Endothelial cell of umbilical vein (primary cell): ENCODE measurements at regions of chr5 and their contacts with region 1.

Region 1: GRCh38 chr5:142426129-142427014 is 101.6 kb upstream of the SPRY4 start:
- DNase-seq: peak; percentile 85
- H3K4me3 ChIP-seq: peak overlapping the region in 1 of 3 experiments; percentile 38
- H3K27ac ChIP-seq: peak overlapping the region; percentile 70
- H3K4me1 ChIP-seq: peaks cover 44% of the 10 kb centered on the region
- H3K27me3 ChIP-seq: no peaks in the 10 kb centered on the region
- CTCF ChIP-seq: no peak
- POLR2A ChIP-seq: peak; percentile 64

Region 2: GRCh38 chr5:142316051-142316450 is 110.3 kb before region 1 on chr5:
- CTCF ChIA-PET with region 1: no interaction called
- POLR2A ChIA-PET with region 1: no interaction called
- dilution Hi-C with region 1: no loop called
- intact Hi-C with region 1: loop called (anchors 2 kb)
- DNase-seq: peak; percentile 82
- H3K4me3 ChIP-seq: no peak overlapping the region
- H3K27ac ChIP-seq: peak overlapping the region; percentile 57
- H3K4me1 ChIP-seq: peaks cover 68% of the 10 kb centered on the region
- H3K27me3 ChIP-seq: no peaks in the 10 kb centered on the region
- CTCF ChIP-seq: no peak
- POLR2A ChIP-seq: no peak

Region 3: DNA sequence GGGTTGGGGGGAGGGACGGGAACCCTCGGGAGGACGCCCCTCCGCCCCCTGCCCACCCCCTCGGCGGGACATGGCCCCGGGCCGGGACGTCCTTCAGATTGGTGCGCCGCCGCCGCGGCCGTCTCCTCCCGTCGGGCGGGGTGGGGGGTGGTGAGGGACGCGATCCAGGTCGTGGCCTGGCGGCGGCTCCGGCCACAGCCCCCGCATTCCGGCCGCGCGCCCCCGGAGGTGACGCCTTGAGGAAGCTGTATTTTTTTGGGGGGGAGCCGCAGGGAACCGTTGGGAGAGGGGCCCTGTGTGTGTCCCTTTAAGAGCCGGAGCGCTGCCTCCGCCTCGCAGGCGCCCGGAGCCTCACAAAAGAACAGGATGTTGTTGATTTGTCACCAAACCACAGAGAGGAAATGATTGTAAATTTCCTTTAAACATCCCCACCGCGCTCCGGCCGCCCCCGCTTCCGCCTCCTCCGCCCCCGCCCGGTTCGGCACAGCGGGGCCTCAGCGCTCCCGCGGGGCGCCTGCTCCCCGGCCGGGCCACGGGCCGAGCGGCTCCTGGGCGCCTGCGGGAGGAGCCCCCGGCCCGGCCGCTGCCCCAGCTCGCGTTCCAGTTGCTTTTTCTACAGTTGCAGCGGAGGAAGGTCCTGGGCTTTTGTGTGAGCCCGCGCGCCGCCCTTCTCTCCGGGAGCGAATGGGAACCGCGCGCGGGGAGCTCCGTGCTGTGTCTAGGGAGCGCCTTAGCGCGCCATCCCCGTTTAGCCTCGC is 69.5 kb before region 1 on chr5:
- CTCF ChIA-PET with region 1: interaction called, 4 read pairs
- POLR2A ChIA-PET with region 1: no interaction called
- dilution Hi-C with region 1: no loop called
- intact Hi-C with region 1: loop called (anchors 1 kb)
- DNase-seq: peak; percentile 94
- H3K4me3 ChIP-seq: peak overlapping the region in 1 of 3 experiments; percentile 54
- H3K27ac ChIP-seq: peak overlapping the region; percentile 74
- H3K4me1 ChIP-seq: peaks cover 31% of the 10 kb centered on the region
- H3K27me3 ChIP-seq: no peaks in the 10 kb centered on the region
- CTCF ChIP-seq: no peak
- POLR2A ChIP-seq: peak; percentile 47

Region 4: DNA sequence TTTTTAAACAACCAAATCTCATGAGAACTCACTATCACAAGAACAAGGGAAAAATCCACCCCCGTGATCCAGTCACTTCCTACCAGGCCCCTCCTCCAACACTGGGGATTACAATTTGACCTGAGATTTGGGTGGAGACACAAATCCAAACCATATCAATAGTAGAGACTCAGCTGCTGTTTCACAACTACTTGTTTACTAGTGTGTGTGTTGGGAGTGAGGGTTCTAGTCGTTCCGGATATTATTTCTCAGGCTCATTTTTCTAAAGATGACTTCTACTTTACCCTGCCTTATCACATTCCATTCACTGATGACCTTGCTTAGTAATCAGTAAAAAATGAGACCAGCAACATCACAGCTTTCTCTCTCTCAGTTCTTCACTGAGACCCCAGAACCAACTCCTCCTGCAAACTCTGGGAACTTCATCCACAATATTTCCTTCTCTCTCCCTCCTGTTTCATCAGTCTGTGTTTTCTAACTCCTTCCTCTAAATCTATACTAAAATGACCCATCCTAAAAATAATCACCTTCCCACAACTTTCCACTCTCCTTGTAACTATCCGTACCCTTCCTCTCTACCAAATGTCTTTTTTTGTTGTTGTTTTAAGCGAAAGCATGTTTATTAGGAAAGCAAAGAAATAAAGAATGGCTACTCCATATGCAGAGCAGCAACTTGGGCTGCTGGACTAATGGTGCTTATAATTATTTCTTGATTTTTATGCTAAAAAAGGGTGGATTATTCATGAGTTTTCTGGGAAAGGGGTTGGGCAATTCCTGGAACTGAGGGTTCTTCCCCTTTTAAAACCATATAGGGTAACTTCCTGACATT is 20.0 kb after region 1 on chr5:
- CTCF ChIA-PET with region 1: interaction called, 5 read pairs
- POLR2A ChIA-PET with region 1: no interaction called
- dilution Hi-C with region 1: no loop called
- intact Hi-C with region 1: loop called (anchors 1 kb)
- DNase-seq: peak; percentile 67
- H3K4me3 ChIP-seq: peak overlapping the region in 1 of 3 experiments; percentile 5
- H3K27ac ChIP-seq: peak overlapping the region; percentile 88
- H3K4me1 ChIP-seq: peaks cover 20% of the 10 kb centered on the region
- H3K27me3 ChIP-seq: no peaks in the 10 kb centered on the region
- CTCF ChIP-seq: no peak
- POLR2A ChIP-seq: peak; percentile 64

Region 5: DNA sequence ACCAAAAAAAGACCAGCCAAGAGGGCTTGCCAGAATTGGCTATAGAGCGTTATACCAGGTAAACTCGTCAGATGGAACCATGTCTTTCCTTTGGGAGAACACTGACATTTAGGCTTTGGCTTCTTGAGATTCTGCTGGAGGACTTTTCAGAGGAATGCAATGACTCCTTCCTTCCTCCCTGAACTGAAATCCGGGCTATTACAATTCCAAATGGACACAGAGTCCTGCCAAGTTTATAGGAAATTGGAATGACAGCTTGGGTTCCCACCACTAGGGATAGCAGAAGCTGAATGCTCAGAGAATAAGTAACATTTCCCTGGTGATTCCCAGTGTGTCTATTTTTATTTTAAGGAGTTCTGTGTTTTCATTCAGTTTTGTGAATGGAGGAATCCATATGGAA is 116.5 kb after region 1 on chr5:
- CTCF ChIA-PET with region 1: interaction called, 10 read pairs
- POLR2A ChIA-PET with region 1: interaction called, 3 read pairs
- dilution Hi-C with region 1: no loop called
- intact Hi-C with region 1: loop called (anchors 1 kb)
- DNase-seq: peak; percentile 61
- H3K4me3 ChIP-seq: no peak overlapping the region
- H3K27ac ChIP-seq: peak overlapping the region; percentile 61
- H3K4me1 ChIP-seq: peaks cover 36% of the 10 kb centered on the region
- H3K27me3 ChIP-seq: no peaks in the 10 kb centered on the region
- CTCF ChIP-seq: peak; percentile 19 to 35
- POLR2A ChIP-seq: peak; percentile 23